Posterior cingulate gyrus (tissue), 11 donors: ENCODE measurements at regions of chr5 and their contacts with region 1.

Region 1: DNA sequence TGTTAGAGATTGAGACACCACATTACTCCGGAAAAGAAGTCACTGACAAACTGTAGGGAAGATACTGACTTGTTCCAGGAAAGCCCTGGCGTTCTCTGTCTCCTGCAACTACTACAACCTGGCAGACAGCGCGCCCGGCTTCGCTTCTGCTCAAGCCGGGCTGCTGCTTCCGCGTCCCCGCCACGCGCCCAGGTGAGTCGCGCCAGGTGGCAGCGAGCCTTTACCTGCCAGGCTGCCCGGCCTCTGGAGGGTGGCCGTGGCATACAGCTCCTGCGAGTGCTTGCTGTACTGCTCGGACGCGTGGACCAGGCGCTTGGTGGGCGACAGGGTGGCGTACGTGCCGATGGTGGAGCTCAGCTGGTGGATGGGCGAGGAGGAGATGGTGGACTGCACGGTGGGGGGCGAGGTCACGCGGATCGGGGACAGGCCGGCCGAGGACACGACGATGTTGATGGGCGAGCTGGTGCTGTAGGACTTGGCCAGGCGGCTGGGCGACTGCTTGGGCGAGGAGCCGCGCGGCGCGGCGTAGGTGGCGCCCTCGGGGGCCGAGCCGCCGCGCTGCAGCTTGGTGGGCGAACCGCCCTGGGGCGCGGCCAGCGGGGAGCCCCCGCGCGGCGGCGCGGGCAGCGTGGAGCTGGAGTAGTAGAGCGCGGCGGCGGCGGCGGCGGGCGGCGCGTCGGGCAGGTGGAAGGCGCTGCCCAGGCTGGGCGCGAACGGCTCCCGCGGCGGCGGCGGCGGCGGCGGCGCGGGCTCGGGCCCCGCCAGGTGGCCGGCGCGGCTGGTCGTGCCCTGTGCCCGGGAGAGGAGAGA is 519.6 kb downstream of the CTNND2 start:
- DNase-seq: peak in 9 of 10 donors; percentile 38 to 94 (median 63)

Region 2: DNA sequence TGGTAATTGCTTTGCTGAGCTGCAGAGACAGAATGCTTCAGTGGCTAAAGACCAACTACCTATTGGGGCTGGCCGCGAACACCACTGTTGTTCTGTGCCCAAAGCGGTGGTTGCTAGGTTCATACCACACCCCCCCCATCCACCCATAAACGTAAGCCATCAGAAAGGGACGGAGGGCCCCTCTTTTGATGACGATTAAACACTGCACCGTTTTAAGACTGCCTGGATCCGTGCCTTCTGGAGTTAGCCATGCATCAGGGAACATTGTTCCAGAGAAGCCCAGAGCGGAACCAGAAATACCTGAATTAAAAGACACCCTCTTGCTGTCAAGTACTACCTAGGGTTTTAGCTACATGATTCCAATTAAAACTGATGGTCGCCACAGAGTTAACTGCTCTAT is 254.5 kb before region 1 on chr5:
- intact Hi-C with region 1: no loop called
- DNase-seq: no peak

Region 3: GRCh38 chr5:11182441-11183268 is 202.0 kb before region 1 on chr5:
- intact Hi-C with region 1: loop called (anchors 10 kb)
- DNase-seq: no peak

Region 4: GRCh38 chr5:11268891-11269290 is 115.8 kb before region 1 on chr5:
- intact Hi-C with region 1: loop called (anchors 1 kb)
- DNase-seq: no peak

Region 5: GRCh38 chr5:11432116-11432515 is 47.5 kb after region 1 on chr5:
- intact Hi-C with region 1: no loop called
- DNase-seq: no peak

Region 6: DNA sequence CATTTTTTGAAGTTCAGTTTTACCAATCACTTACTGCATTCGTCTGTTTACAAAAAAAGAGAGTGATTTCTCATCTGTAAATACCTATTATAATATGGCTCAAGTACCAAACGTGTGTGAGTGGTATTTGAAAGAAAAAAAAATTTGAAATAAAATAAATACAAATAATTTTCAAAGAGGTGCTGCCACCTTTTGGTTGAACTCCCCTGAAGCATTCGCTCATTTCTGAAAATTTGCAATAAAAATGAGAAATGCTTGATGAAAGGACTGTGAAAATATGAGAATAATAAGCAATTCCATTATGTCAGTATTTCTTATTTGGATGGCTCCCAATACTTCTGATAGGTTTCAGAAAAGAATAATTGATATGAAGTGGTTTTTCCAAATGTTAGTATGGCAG is 109.7 kb after region 1 on chr5:
- intact Hi-C with region 1: loop called (anchors 10 kb)
- DNase-seq: no peak

Region 7: DNA sequence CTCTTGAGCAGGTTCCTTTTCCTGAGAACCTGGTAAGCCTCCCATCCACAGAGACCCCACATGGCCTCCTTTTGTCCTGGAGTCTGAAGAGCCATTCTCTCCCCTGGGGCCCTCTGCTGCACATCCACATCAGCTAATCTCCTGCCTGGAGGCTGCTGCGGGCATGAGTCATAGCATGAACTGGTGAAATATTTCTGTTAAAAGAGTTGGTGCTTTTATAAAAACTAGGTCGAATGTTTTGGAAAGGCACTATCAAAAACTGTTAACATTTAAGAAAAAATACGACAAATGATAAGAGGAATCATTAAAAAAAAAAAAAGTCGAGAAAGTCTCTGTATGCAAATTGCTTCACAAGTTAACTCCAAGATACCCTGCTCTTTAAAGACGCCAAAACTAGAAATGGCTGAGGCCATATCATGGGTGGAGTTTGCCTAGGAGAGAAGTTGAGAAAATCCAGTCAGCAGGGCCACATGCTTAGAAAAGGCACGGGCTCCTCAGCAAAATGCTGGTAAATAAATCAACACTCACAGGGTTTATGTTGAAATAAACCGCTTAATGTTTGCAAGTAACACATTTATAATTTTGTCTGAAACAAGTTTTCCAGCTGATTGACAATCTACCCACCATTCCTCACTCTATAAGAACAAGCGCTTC is 120.4 kb after region 1 on chr5:
- intact Hi-C with region 1: no loop called
- DNase-seq: peak in 3 of 10 donors; percentile 73 to 87 (median 81)

Region 8: DNA sequence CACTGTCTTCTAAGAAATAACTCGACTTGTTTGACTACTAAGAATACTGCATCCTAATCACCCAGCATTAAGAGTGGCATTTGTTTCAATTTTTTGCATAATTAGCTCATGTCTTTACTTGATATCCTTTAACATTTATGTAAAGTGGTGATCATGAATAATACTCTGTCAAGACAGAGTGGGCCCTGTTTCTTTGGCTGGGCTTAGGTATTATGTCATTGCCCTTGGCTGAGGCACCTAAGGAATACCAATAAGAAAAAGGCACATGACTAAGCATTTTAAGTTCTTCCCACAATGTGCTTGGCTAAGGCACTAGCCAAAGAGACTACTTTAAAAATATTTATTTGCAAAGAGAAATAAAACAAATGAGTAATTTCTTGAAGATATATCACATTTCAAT is 211.5 kb after region 1 on chr5:
- intact Hi-C with region 1: loop called (anchors 5 kb)
- DNase-seq: no peak

Region 9: GRCh38 chr5:11744128-11744527 is 359.5 kb after region 1 on chr5:
- intact Hi-C with region 1: no loop called
- DNase-seq: no peak

Region 10: GRCh38 chr5:11903614-11904269 is 519.1 kb after region 1 on chr5:
- intact Hi-C with region 1: loop called (anchors 10 kb)
- DNase-seq: peak; percentile 25 to 92 (median 38)